Breast epithelium (tissue), 4 donors: ENCODE measurements at regions of chr7 and their contacts with region 1.

Region 1: GRCh38 chr7:22351878-22352277 is 5.1 kb downstream of the RAPGEF5 start:
- DNase-seq: no peak
- H3K4me3 ChIP-seq: no peak overlapping the region
- H3K27ac ChIP-seq: no peak overlapping the region
- H3K4me1 ChIP-seq: no peaks in the 10 kb centered on the region
- H3K27me3 ChIP-seq: no peaks in the 10 kb centered on the region
- CTCF ChIP-seq: no peak
- POLR2A ChIP-seq: no peak

Region 2: GRCh38 chr7:22193450-22193983 is 158.4 kb before region 1 on chr7:
- intact Hi-C with region 1: no loop called
- DNase-seq: no peak
- H3K4me3 ChIP-seq: peak overlapping the region in 1 of 3 donors; percentile 18
- H3K27ac ChIP-seq: no peak overlapping the region
- H3K4me1 ChIP-seq: no peaks in the 10 kb centered on the region
- H3K27me3 ChIP-seq: no peaks in the 10 kb centered on the region
- CTCF ChIP-seq: no peak
- POLR2A ChIP-seq: no peak

Region 3: DNA sequence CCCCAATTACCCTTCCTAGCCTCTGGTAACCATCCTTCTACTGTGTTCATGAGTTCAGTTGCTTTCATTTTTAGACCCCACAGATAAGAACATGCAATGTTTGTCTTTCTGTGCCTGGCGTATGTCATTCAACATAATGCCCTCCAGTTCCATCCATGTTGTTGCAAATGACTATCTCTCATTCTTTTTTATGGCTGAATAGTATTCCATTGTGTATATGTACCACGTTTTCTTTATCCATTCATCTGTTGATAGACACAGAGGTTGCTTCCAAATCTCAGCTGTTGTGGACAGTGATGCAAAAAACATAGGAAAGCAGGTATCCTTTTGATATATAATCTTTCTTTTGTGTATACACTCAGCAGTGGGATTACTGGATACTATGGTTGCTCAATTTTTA is 46.2 kb before region 1 on chr7:
- intact Hi-C with region 1: loop called (anchors 2 kb)
- DNase-seq: no peak
- H3K4me3 ChIP-seq: no peak overlapping the region
- H3K27ac ChIP-seq: no peak overlapping the region
- H3K4me1 ChIP-seq: no peaks in the 10 kb centered on the region
- H3K27me3 ChIP-seq: no peaks in the 10 kb centered on the region
- CTCF ChIP-seq: no peak
- POLR2A ChIP-seq: no peak